ENCODE measurements at regions of chr22 and their contacts with region 1.

Region 1: DNA sequence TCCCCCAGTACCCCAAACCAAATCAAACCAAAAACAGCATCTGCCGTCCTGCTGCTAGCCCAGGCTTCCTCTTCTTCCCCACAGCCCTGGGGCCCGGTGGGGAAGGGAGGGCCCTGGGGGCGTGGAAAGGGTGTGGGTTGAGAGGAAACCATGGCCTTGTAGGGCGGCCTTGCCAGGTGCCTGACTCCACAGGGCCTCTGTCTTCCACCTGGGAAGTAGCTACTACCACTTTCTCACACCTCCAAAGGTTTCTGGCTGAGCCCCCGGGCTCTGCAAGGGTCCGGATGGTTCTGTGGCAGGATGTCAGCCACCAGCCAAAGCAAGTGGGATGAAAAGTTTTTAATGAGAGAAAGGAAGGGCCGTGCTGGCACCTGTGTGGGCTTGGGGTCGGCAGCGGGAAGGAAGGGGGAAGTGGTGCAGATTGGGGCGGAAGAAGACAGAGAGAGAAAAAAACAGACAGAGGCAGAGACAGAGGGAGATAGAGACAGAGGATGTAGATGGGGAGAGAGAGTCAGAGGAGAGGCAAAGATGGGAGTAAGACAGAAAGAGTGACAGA is 10.5 kb downstream of the TPST2 start:
- DNase-seq: no peak
- H3K4me3 ChIP-seq: no peak overlapping the region
- H3K27ac ChIP-seq: peak overlapping the region; percentile 29; the same call in 1 of the 2 replicates
- H3K4me1 ChIP-seq: peaks cover 9 to 38% (median 15%) of the 10 kb centered on the region in 4 experiments
- H3K27me3 ChIP-seq: no peaks in the 10 kb centered on the region
- CTCF ChIP-seq: no peak
- EP300 ChIP-seq: no peak
- POLR2A ChIP-seq: no peak
- RAD21 ChIP-seq: no peak

Region 2: DNA sequence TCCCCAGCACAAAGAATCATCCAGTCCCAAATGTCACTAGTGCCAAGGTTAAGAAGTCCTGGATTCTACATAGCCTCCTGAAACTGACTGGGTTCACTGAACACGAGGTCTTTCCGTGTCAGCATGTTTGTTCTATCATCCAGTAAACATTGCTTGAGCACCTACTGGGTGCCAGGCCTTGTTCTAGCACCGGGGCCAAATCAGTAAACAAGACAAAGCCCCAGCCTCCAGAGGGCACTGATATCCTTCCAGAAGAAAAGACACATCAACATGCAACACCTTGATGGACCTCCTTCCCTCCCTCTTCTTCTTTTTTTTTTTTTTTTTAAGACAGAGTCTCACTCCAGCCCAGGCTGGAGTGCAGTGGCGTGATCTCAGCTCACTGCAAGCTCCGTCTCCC is 16.4 kb before region 1 on chr22:
- CTCF ChIA-PET with region 1: interaction called, 10 read pairs
- POLR2A ChIA-PET with region 1: interaction called, 6 read pairs
- DNase-seq: no peak
- H3K4me3 ChIP-seq: no peak overlapping the region
- H3K27ac ChIP-seq: no peak overlapping the region
- H3K4me1 ChIP-seq: peaks cover 20 to 43% (median 29%) of the 10 kb centered on the region in 4 experiments
- H3K27me3 ChIP-seq: no peaks in the 10 kb centered on the region
- CTCF ChIP-seq: peak in 2 of 3 experiments; percentile 40 to 48; a peak in 2 of 4 replicates
- EP300 ChIP-seq: no peak
- POLR2A ChIP-seq: no peak
- RAD21 ChIP-seq: peak; percentile 57 to 66